ENCODE measurements at regions of chrX and their contacts with region 1.

Region 1: GRCh38 chrX:123960042-123960611 is 1.4 kb upstream of the STAG2 start:
- DNase-seq: peak; percentile 85 to 94
- H3K4me3 ChIP-seq: peak overlapping the region; percentile 79
- H3K27ac ChIP-seq: peak overlapping the region; percentile 95
- H3K4me1 ChIP-seq: peaks cover 29% of the 10 kb centered on the region
- H3K27me3 ChIP-seq: no peaks in the 10 kb centered on the region
- CTCF ChIP-seq: peak; percentile 89

Region 2: DNA sequence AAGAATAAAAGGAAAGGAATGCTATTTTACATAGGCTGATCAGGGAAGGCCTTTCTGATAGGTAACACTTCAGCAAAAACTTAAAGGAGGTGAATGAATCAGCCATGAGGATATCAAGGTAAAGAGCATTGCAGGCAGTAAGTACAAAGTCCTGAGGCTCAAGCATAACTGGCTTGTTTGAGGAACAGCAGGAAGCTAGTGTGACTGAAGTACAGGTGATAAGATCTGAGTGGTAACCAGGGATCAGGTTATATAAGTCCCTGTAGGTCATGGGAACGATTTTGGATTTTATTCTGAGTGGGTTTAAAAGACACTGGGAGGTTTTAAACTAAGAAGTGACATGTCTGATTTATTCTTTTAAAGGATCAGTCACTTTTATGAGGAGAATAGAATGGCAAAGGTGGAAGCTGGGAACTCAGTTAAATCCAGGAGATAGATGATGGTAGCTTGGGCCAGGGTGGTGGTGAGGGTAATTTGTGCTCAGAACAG is 180.2 kb before region 1 on chrX:
- CTCF ChIA-PET with region 1: no interaction called
- POLR2A ChIA-PET with region 1: no interaction called
- intact Hi-C with region 1: loop called (anchors 5 kb)
- DNase-seq: peak; percentile 14 to 90
- H3K4me3 ChIP-seq: no peak overlapping the region
- H3K27ac ChIP-seq: peak overlapping the region; percentile 78
- H3K4me1 ChIP-seq: peaks cover 26% of the 10 kb centered on the region
- H3K27me3 ChIP-seq: no peaks in the 10 kb centered on the region
- CTCF ChIP-seq: no peak

Region 3: DNA sequence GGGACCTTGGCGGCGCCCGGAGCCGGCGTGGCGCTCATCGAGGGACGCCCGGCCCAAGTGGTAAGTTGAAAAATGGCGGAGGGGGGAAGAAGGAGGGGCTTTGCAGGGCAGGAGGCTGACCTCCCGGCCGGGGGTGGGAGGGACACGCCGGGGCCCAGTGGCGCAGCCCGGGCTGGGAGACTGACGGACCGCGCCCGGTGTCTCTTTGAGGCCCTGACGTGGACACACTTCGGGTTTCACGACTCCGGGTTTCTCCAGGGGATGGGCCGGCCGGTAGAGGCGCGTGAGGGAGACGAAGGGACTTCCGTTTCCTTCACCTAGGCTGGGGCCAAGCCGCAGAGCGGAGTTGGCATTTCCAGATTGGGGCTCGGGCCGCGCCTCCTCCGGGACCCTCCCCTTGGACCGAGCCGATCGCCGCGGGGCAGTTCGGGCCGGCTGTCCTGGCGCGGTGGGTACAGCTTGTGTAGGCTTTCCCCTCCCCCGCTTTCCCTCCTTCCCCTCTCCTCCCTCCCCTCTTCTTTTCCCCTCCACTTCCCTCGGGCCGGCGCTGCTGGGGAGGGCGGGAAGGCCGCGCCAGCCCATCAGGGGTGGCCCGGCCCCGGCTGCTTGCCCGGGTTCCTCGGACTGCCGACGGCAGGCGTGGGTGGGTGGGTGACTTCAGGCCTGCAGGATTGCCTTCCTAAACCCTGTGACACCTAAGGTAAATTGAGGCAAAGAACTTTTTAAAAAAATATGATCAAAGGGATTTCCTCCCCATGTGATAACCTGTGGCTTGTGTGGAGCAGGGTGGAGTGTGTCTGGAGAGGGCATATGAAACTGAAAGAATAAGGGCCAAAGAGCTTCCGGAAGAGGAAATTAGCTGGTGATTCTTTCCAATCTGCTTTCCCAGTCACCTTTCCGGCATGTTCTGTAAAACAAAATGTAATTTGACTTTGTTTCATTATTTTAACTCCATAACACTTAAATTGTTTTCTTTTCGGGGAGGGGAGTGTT is 100.0 kb before region 1 on chrX and contains the start of gene XIAP:
- CTCF ChIA-PET with region 1: no interaction called
- POLR2A ChIA-PET with region 1: interaction called, 6 read pairs
- intact Hi-C with region 1: loop called (anchors 1 kb)
- DNase-seq: peak; percentile 91 to 94
- H3K4me3 ChIP-seq: peak within 1 kb of the TSS; percentile 64
- H3K27ac ChIP-seq: peak within 1 kb of the TSS; percentile 92
- H3K4me1 ChIP-seq: peaks cover 30% of the 10 kb centered on the region
- H3K27me3 ChIP-seq: no peaks in the 10 kb centered on the region
- CTCF ChIP-seq: no peak
- total RNA-seq, gene XIAP: 47.7 and 59.5 TPM in 2 replicates

Region 4: DNA sequence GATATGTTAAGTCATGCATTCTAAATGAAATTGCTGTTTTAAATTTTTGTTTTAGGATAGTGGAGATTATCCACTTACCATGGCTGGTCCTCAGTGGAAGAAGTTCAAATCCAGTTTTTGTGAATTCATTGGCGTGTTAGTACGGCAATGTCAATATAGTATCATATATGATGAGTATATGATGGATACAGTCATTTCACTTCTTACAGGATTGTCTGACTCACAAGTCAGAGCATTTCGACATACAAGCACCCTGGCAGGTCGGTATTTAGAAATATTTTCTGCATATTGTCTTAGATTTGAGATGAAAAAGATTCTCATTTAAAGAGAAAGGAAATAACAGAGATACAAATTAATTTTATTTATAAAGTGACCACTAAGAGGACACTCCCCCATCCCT is 85.0 kb after region 1 on chrX:
- CTCF ChIA-PET with region 1: no interaction called
- POLR2A ChIA-PET with region 1: no interaction called
- intact Hi-C with region 1: loop called (anchors 10 kb)
- DNase-seq: no peak
- H3K4me3 ChIP-seq: no peak overlapping the region
- H3K27ac ChIP-seq: no peak overlapping the region
- H3K4me1 ChIP-seq: no peaks in the 10 kb centered on the region
- H3K27me3 ChIP-seq: no peaks in the 10 kb centered on the region
- CTCF ChIP-seq: no peak

Region 5: DNA sequence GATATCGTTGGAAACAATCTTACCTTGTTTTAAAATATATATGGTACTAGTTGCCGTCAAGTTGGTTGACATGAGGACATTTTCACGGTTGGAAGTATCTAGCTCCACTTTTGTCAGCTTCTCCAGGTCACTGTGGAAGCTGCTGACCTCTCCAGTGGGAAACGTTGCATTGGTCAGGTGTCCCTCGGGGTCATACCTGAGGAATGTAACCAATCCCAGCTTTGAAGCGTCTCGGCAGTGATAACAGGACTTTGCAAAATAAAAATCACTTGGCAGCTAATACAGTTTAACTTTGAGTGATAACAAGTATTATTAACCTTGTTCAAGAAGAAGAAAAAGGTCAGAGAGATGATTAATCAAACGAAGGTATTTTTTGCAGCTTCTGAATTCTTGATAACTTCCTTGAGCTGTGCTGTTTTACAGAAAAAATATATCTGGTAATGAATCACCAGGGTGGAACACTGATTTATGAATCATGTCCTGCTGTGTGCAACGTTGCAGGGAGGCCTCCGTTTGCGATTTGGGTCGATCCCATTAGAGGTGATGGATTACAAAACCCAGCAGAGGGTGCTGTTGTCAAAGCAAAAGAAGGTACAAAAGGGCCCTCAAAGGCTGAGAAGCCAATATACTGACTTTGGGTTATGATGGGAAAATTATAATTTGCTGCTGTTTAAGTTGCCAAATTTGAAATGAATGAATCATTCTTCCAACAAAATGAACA is 446.3 kb after region 1 on chrX:
- CTCF ChIA-PET with region 1: no interaction called
- POLR2A ChIA-PET with region 1: no interaction called
- intact Hi-C with region 1: loop called (anchors 10 kb)
- DNase-seq: peak; percentile 66 to 91
- H3K4me3 ChIP-seq: no peak overlapping the region
- H3K27ac ChIP-seq: 0 out of 2 replicates have a peak overlapping the region, but pooled peaks have one; percentile 2
- H3K4me1 ChIP-seq: peaks cover 7% of the 10 kb centered on the region
- H3K27me3 ChIP-seq: no peaks in the 10 kb centered on the region
- CTCF ChIP-seq: peak; percentile 83

Region 6: GRCh38 chrX:125101971-125102755 is 1142.0 kb after region 1 on chrX:
- CTCF ChIA-PET with region 1: interaction called, 12 read pairs
- POLR2A ChIA-PET with region 1: no interaction called
- intact Hi-C with region 1: no loop called
- DNase-seq: no peak
- H3K4me3 ChIP-seq: no peak overlapping the region
- H3K27ac ChIP-seq: no peak overlapping the region
- H3K4me1 ChIP-seq: no peaks in the 10 kb centered on the region
- H3K27me3 ChIP-seq: no peaks in the 10 kb centered on the region
- CTCF ChIP-seq: no peak

Region 7: DNA sequence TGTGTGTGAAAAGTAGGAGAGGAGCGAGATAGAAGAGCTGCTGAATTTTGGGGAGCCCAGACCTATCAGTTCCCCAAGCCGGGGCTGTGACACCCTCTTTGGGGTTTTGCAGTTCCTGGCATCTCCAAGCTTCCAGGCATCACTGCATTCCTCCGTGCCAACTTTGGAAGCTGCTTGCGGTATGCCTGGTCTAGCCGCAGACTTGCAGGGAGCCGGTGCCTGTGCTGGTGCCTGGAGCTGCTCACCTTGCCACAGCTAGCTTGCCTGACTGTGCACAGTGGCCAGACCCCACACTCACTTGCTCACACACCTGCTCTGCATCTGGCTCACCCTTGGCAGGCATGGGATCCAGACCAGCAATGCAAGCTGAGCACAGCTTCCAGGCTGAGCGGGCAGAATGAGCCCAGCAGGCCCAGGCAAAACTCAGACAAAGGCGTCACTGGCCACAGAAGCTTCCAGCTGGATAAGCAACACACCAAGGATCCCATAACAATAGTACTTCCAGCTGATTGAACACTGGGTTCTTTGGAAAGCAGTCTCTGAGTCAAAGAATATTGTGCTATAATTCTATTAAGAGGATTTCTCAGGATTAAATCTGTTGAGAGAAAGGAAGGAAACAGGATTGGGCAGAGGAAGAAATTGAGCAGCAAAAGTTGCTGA is 1750.4 kb after region 1 on chrX:
- CTCF ChIA-PET with region 1: no interaction called
- POLR2A ChIA-PET with region 1: no interaction called
- intact Hi-C with region 1: no loop called
- DNase-seq: no peak
- H3K4me3 ChIP-seq: no peak overlapping the region
- H3K27ac ChIP-seq: no peak overlapping the region
- H3K4me1 ChIP-seq: no peaks in the 10 kb centered on the region
- H3K27me3 ChIP-seq: no peaks in the 10 kb centered on the region
- CTCF ChIP-seq: no peak